ENCODE measurements at regions of chr12 and their contacts with region 1.

Region 1: GRCh38 chr12:13079440-13079906 is 24.0 kb downstream of the GSG1 start:
- DNase-seq: peak; percentile 94
- ATAC-seq: peak; percentile 99
- H3K4me3 ChIP-seq: no peak overlapping the region
- H3K27ac ChIP-seq: peak overlapping the region; percentile 71
- H3K4me1 ChIP-seq: peaks cover 19% of the 10 kb centered on the region
- H3K27me3 ChIP-seq: no peaks in the 10 kb centered on the region
- CTCF ChIP-seq: peak; percentile 73
- EP300 ChIP-seq: peak in 1 of 2 experiments; percentile 62; a peak in 2 of 4 replicates
- POLR2A ChIP-seq: no peak
- RAD21 ChIP-seq: no peak

Region 2: DNA sequence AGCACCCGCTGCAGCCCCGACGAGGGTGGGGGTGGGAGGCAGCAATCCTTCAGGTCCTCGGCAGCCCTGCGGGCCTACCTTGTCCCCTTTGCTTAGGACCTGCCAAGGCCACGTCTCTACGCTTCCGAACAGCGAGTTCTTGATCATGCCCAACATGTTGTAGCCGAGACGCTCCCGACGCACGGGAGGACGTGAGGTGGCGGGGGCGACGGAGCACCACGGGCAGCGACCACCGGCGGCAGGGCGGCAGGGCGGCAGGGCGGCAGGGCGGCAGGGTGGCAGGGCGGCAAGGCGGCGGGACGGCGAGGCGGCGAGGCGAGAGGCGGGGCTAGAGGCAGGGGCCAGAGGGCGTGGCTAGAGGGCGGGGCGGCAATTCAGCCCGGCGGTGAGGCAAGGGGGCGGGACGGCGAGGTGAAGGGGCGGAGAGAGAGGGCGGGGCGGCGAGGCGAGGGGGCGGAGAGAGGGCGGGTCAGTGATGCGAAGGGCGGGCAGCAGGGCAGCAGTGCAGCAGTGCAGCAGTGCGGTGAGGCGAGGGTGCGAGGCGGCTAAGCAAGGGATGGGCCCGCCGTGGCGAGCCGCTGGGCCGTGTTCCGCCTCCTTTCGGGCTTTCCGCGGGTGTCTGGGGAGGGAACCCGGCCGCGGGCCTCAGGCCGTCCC is 79.4 kb before region 1 on chr12 and contains the start of gene HEBP1:
- CTCF ChIA-PET with region 1: no interaction called
- POLR2A ChIA-PET with region 1: no interaction called
- in situ Hi-C with region 1: no loop called
- intact Hi-C with region 1: loop called (anchors 2 kb)
- DNase-seq: peak; percentile 59
- ATAC-seq: peak; percentile 90
- H3K4me3 ChIP-seq: peak within 1 kb of the TSS; percentile 74 to 85 (median 84)
- H3K27ac ChIP-seq: peak within 1 kb of the TSS; percentile 52
- H3K4me1 ChIP-seq: peaks cover 27% of the 10 kb centered on the region
- H3K27me3 ChIP-seq: no peaks in the 10 kb centered on the region; a peak in 1 of 5 replicates
- CTCF ChIP-seq: no peak
- EP300 ChIP-seq: peak in 1 of 2 experiments; percentile 60; a peak in 1 of 4 replicates
- POLR2A ChIP-seq: peak; percentile 61 to 93
- RAD21 ChIP-seq: no peak
- total RNA-seq, gene HEBP1: 7.8 and 19.0 TPM in 2 replicates

Region 3: GRCh38 chr12:13044002-13044905 is 35.2 kb before region 1 on chr12 and contains the start of gene FAM234B:
- CTCF ChIA-PET with region 1: no interaction called
- POLR2A ChIA-PET with region 1: no interaction called
- in situ Hi-C with region 1: no loop called
- intact Hi-C with region 1: loop called (anchors 1 kb)
- DNase-seq: peak; percentile 40
- ATAC-seq: peak; percentile 99
- H3K4me3 ChIP-seq: peak within 1 kb of the TSS; percentile 92 to 99 (median 94)
- H3K27ac ChIP-seq: no peak within 1 kb of the TSS
- H3K4me1 ChIP-seq: peaks cover 21% of the 10 kb centered on the region; the same call in 1 of the 2 replicates
- H3K27me3 ChIP-seq: peaks cover 2 to 30% of the 10 kb centered on the region in 2 experiments; a peak in 3 of 5 replicates
- CTCF ChIP-seq: peak; percentile 74
- EP300 ChIP-seq: no peak
- POLR2A ChIP-seq: peak in 1 of 2 experiments; percentile 75; a peak in 2 of 4 replicates
- RAD21 ChIP-seq: peak; percentile 21; the same call in 1 of the 2 replicates
- total RNA-seq, gene FAM234B: 4.2 and 7.8 TPM in 2 replicates

Region 4: DNA sequence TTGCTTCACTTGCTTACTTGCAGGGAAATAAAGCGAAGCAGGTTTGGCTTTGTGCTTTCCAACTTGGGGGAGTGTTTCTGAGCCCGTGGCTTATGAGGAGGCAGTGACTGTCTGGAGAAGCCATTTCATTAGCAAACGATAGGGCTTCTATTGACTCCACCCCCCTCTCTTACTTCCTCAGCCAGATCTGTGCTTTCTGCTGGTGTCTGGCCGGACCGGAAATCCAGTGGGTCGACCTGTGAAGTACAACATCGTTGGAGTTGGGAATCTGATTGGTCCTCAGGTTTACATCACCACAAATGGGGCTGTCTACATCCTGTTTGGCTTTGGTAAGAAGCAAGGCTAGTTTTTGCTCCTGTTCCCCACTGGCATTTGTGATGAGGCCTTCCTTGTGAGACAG is 13.0 kb before region 1 on chr12:
- CTCF ChIA-PET with region 1: no interaction called
- POLR2A ChIA-PET with region 1: no interaction called
- in situ Hi-C with region 1: no loop called
- intact Hi-C with region 1: loop called (anchors 1 kb)
- DNase-seq: no peak
- ATAC-seq: no peak
- H3K4me3 ChIP-seq: no peak overlapping the region
- H3K27ac ChIP-seq: no peak overlapping the region
- H3K4me1 ChIP-seq: no peaks in the 10 kb centered on the region
- H3K27me3 ChIP-seq: no peaks in the 10 kb centered on the region
- CTCF ChIP-seq: no peak
- EP300 ChIP-seq: no peak
- POLR2A ChIP-seq: no peak
- RAD21 ChIP-seq: no peak

Region 5: GRCh38 chr12:13094347-13094746 is 14.9 kb after region 1 on chr12:
- CTCF ChIA-PET with region 1: no interaction called
- POLR2A ChIA-PET with region 1: no interaction called
- in situ Hi-C with region 1: no loop called
- intact Hi-C with region 1: no loop called
- DNase-seq: no peak
- ATAC-seq: no peak
- H3K4me3 ChIP-seq: no peak overlapping the region
- H3K27ac ChIP-seq: no peak overlapping the region
- H3K4me1 ChIP-seq: peaks cover 18% of the 10 kb centered on the region
- H3K27me3 ChIP-seq: peaks cover under 1 to 56% of the 10 kb centered on the region in 2 experiments; a peak in 4 of 5 replicates
- CTCF ChIP-seq: no peak
- EP300 ChIP-seq: no peak
- POLR2A ChIP-seq: no peak
- RAD21 ChIP-seq: no peak

Measured in HepG2 (cell line).